ENCODE measurements at regions of chr5 and their contacts with region 1.

Region 1: GRCh38 chr5:65481635-65482295 is at the start of gene ADAMTS6:
- DNase-seq: peak; percentile 69
- H3K4me3 Mint-ChIP-seq: no peak within 1 kb of the TSS
- H3K27ac Mint-ChIP-seq: peak within 1 kb of the TSS; percentile 84
- H3K4me1 Mint-ChIP-seq: peaks cover 21% of the 10 kb centered on the region
- H3K27me3 Mint-ChIP-seq: peaks cover 6% of the 10 kb centered on the region
- total RNA-seq, gene ADAMTS6: 1.4 and 1.7 TPM in 2 replicates

Region 2: DNA sequence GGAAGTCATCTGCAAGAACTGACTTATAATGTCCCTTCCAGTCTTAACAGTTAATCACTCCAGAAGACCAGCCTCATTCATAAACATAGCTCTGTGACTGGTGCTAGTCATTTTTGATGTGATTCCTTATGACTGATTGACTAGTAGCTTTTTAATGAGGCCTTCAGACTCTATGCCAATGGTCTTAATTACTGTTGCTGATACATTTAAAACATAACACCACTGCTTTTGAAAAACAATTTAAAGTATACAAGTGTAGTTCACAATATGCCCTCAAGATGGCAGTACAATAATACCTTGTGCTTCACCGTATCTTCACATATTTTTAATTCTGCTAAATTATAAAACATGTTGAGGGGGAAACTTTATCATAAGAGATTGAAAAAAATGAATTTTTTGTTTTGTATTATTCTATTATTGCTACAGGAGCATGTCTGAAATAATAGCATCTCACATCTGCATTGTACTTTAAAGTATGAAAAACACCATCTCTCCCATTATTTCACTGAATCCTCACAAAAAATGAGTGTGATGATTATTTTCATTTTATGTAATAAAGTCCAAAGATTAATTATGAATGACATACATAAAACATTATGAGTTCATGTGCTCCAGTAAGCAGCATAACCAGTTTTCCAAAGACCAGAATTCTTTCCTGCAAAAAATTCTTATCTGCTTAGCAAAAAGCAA is 846.6 kb before region 1 on chr5:
- intact Hi-C with region 1: loop called (anchors 1 kb)
- DNase-seq: no peak
- H3K4me3 Mint-ChIP-seq: no peak overlapping the region
- H3K27ac Mint-ChIP-seq: no peak overlapping the region
- H3K4me1 Mint-ChIP-seq: peaks cover 5% of the 10 kb centered on the region
- H3K27me3 Mint-ChIP-seq: peaks cover 23% of the 10 kb centered on the region

Region 3: DNA sequence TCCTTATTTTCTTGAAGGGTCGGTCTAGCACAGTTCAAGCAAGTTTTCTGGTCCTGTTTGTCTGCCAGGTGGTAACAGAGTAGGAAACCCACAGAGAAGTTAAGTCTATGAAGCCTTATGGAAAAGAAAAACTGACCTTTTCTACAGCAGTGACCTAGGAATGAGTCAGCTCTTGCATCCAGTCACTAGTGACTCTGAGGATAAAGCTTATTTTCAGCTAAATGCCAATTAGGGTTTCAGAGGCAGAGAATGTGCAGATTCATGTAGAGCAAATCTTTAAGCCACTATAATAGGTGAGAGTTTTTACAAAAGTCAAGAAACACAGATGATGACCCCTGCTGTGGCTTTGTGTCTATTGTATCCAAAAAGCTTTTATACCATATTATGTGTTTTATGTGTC is 612.3 kb before region 1 on chr5:
- intact Hi-C with region 1: loop called (anchors 5 kb)
- DNase-seq: no peak
- H3K4me3 Mint-ChIP-seq: no peak overlapping the region
- H3K27ac Mint-ChIP-seq: no peak overlapping the region
- H3K4me1 Mint-ChIP-seq: peaks cover 3% of the 10 kb centered on the region
- H3K27me3 Mint-ChIP-seq: no peaks in the 10 kb centered on the region

Region 4: DNA sequence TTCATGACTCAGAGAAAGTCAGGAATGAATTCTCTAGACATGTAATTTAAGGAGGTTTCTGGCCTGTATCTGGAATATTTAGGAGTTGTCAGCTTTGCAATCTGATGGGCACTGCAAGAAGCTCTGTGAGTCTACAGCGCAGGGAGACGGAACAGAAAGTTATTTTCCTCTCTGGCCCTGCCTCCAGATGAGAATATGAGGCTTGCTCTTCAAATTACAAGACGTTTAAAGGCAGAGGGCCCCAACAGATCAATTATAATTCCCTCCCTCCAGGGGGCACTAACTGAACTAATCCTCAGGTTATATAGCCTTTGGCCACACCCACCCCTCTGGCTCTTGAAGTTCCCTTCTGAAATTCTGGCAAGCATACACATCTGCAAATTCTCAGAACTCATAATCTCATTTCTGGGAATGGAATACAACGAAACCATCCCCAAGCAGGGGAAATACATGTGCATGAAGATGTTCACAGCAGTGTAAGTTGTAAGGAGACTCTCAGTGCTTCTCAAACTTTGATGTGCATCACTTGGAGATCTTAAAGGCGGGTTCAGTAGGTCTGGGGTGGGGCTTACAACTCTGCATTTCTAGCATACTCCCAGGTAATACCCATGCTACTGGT is 405.4 kb before region 1 on chr5:
- intact Hi-C with region 1: loop called (anchors 1 kb)
- DNase-seq: peak; percentile 55
- H3K4me3 Mint-ChIP-seq: no peak overlapping the region
- H3K27ac Mint-ChIP-seq: no peak overlapping the region
- H3K4me1 Mint-ChIP-seq: peaks cover 13% of the 10 kb centered on the region
- H3K27me3 Mint-ChIP-seq: peaks cover 26% of the 10 kb centered on the region

Region 5: DNA sequence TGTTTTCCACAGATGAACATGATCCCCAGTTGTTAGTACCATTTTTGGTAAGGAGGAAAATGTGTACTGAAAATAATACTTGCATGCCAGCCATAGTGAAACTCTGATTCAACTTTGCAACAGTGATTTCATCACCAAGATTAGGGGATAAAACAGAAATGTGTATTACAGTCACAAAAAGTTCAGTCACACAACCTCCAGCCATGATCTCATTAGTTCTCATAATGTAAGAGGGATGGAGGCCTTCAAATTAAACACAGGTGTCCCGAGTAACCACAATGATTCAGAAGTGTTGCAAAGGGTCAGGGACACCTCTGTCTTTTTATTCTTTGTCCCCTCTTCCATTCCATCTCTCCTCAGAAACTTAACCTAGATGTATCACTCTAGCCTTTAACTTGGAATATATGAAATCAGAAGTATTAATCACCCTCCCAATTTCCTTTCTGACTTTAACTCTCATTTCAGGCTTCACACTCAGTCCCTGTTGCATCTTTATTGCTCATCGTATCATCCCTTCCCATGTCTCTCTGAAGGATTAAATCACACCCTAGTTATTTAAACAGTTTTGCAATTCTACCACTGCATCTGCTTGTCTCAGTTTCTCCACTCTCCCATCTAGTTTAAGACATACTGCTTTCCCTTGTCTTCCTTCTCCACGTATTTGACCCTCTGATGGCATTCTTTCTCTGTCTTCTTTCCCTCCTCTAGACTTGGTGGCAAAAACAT is 291.3 kb before region 1 on chr5:
- intact Hi-C with region 1: loop called (anchors 5 kb)
- DNase-seq: no peak
- H3K4me3 Mint-ChIP-seq: no peak overlapping the region
- H3K27ac Mint-ChIP-seq: peak overlapping the region; percentile 23
- H3K4me1 Mint-ChIP-seq: peaks cover 8% of the 10 kb centered on the region
- H3K27me3 Mint-ChIP-seq: peaks cover 10% of the 10 kb centered on the region

Region 6: GRCh38 chr5:65539827-65540226 is 58.1 kb after region 1 on chr5:
- intact Hi-C with region 1: no loop called
- DNase-seq: no peak
- H3K4me3 Mint-ChIP-seq: no peak overlapping the region
- H3K27ac Mint-ChIP-seq: no peak overlapping the region
- H3K4me1 Mint-ChIP-seq: no peaks in the 10 kb centered on the region
- H3K27me3 Mint-ChIP-seq: no peaks in the 10 kb centered on the region

Region 7: DNA sequence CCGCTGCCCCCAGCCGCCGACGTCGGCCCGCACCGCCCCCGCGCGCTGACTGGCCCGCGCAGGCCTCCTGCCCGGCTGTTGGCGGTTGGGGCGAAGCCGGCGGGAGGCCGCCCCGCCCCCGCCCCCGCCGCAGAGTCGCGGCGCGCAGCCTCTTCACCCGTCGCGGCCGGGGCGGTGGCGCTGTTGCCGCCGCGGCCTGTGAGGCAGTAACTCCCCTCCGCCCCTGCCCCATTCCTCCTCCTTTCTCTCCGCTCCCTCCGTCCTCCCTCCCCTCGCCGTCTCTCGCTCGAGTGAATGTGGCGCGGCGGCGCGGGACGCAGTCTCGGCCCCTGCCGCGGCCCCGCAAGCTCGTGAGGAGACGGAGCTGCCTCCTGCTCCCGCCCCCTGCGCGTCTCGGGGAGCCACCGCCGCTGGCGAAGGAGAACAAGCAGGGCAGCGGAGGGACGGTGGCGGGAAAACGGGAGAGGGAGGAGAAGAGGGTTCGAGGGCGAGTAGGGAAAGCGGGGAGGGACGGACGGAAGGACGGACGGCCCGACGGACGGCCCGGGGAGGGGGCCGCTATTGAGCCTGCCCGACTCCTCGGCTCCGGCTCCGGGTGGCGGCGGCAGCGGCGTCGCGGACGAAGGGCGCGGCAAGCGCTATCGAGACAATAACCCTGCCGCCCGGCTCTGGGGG is 444.0 kb after region 1 on chr5:
- intact Hi-C with region 1: loop called (anchors 5 kb)
- DNase-seq: peak; percentile 75
- H3K4me3 Mint-ChIP-seq: peak overlapping the region; percentile 87
- H3K27ac Mint-ChIP-seq: peak overlapping the region; percentile 88
- H3K4me1 Mint-ChIP-seq: peaks cover 18% of the 10 kb centered on the region
- H3K27me3 Mint-ChIP-seq: peaks cover 29% of the 10 kb centered on the region

Measured in activated T-helper 2 cell treated with anti-CD3 and anti-CD28 coated beads, Interferon-gamma antibody, Interleukin-2, Interleukin-4, amounts not matched to agents 10 μg/mL and 5 μg/mL and 100 μg/mL, durations not matched to agents 14 hours and 24 hours and 36 hours (primary cell).